Esophagus squamous epithelium (tissue), 5 donors: ENCODE measurements at regions of chr22 and their contacts with region 1.

Region 1: DNA sequence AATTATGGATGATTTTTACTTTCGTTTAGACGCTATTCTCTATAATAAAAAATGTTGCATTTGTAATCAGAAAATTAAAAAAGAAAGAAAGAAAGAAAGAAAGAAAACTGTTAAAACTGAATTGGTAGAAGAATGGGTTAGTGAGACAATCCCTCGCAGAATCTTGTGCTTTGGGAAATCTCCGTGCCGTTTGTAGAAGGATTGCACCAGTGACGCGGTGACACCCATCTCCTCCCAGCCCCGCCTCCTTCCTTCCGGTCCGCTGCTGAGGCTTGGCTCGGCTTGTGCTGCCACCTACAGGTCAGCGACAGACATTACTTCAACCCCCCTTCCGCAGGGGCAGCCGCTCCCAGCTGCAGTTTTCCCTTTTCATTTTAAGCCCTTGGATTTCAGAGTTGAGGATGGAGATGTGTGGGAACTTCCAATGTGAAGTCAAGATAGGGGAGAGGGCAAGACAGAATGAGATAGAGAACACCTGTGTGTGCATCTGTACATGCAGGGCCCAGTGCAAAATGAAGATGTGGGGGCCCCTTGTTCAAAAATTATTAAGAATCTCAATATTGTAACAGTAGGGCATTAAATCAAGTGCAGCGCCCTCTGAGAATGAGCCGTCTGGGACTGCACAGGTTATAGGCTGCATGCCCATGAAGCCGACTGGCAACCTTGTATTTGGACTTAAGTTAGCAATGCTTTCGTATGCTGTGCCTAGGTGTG is 41.1 kb downstream of the TST start:
- DNase-seq: peak; percentile 42
- H3K4me3 ChIP-seq: peak overlapping the region; percentile 25 to 58 (median 44)
- H3K27ac ChIP-seq: peak overlapping the region in 3 of 4 donors; percentile 49 to 65 (median 50)
- H3K4me1 ChIP-seq: peaks cover 5 to 23% (median 5%) of the 10 kb centered on the region in 3 donors
- H3K27me3 ChIP-seq: peaks cover 0 to 23% (median 0%) of the 10 kb centered on the region in 4 donors
- CTCF ChIP-seq: peak; percentile 89 to 98 (median 96)
- POLR2A ChIP-seq: no peak

Region 2: GRCh38 chr22:36781656-36782627 is 196.2 kb before region 1 on chr22:
- intact Hi-C with region 1: loop called (anchors 10 kb)
- DNase-seq: peak; percentile 17
- H3K4me3 ChIP-seq: no peak overlapping the region
- H3K27ac ChIP-seq: peak overlapping the region in 2 of 4 donors; percentile 42 to 78
- H3K4me1 ChIP-seq: peaks cover 0 to 11% (median 7%) of the 10 kb centered on the region in 3 donors
- H3K27me3 ChIP-seq: peaks cover 0 to 39% (median 0%) of the 10 kb centered on the region in 4 donors
- CTCF ChIP-seq: peak; percentile 82 to 96 (median 90)
- POLR2A ChIP-seq: no peak